Vagina (tissue), 2 donors: ENCODE measurements at regions of chr4 and their contacts with region 1.

Region 1: GRCh38 chr4:87848622-87849351 is 16.0 kb downstream of the MEPE start:
- DNase-seq: no peak
- H3K4me3 ChIP-seq: peak overlapping the region in 1 of 2 donors; percentile 14
- H3K27ac ChIP-seq: no peak overlapping the region
- H3K4me1 ChIP-seq: no peaks in the 10 kb centered on the region
- H3K27me3 ChIP-seq: no peaks in the 10 kb centered on the region
- CTCF ChIP-seq: peak; percentile 25 to 58 (median 53)
- POLR2A ChIP-seq: no peak

Region 2: GRCh38 chr4:87235020-87235671 is 613.6 kb before region 1 on chr4:
- intact Hi-C with region 1: no loop called
- DNase-seq: no peak
- H3K4me3 ChIP-seq: peak overlapping the region; percentile 34 to 39
- H3K27ac ChIP-seq: peak overlapping the region; percentile 57
- H3K4me1 ChIP-seq: peaks cover 3% of the 10 kb centered on the region
- H3K27me3 ChIP-seq: no peaks in the 10 kb centered on the region
- CTCF ChIP-seq: no peak
- POLR2A ChIP-seq: no peak

Region 3: DNA sequence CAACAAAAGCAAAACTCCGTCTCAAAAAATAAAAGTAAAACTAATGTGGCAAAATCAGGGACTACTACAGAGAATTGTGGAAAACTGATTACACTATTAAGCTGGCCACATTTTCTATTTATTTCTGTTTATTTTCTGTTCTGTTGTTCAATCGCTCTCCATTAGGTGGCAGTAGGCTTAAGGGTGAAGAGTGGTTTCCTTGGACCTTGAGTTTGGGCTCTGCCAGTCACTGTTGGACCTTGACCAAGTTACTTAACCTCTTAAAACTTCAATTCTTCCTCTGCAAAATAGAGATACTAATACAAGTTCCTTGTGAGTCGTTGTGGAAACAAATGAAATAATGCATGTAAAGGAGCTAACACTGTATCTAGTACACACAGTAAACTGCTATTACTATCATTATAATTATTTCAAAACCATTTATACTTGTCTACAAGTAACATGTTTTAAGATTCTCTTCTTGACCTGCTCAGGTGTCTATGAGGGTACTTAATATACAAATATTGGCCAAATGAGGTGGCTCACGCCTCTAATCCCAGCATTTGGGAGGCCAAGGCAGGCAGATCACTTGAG is 473.0 kb before region 1 on chr4:
- intact Hi-C with region 1: loop called (anchors 10 kb)
- DNase-seq: no peak
- H3K4me3 ChIP-seq: no peak overlapping the region
- H3K27ac ChIP-seq: peak overlapping the region; percentile 69
- H3K4me1 ChIP-seq: peaks cover 16% of the 10 kb centered on the region
- H3K27me3 ChIP-seq: no peaks in the 10 kb centered on the region
- CTCF ChIP-seq: peak; percentile 29 to 67 (median 67)
- POLR2A ChIP-seq: no peak

Region 4: DNA sequence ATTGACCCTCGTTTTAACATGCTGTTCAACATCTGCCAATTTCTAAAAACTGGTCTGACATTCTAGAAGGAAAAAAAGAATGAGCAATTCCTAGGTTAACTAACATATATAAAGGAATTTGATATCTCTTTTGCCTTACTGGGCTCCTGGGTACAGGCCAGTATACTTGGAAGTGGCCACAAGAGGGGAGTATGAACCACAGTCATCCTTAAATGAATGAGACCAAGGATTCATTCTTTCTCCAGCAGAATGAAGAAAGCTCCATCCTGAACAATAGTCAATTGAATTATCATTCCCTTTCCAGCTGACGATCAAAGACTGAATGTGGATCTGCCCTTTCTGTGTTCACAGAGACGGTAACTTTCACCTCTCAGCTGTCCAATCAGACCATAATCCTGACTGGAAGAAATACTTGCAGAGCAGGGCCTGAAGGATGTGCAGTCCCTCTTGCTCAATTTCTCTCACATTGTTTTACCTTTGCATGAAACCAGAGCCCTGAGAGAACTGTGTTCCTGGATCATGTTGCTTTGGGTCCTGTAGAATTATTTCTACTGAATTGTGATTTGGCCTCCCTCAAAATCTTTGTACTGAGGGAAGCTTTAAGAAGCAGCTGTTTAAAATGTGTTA is 304.8 kb before region 1 on chr4:
- intact Hi-C with region 1: loop called (anchors 10 kb)
- DNase-seq: peak in 1 of 2 donors; percentile 65
- H3K4me3 ChIP-seq: no peak overlapping the region
- H3K27ac ChIP-seq: peak overlapping the region; percentile 32
- H3K4me1 ChIP-seq: peaks cover 9% of the 10 kb centered on the region
- H3K27me3 ChIP-seq: no peaks in the 10 kb centered on the region
- CTCF ChIP-seq: peak; percentile 53 to 63 (median 62)
- POLR2A ChIP-seq: no peak

Region 5: GRCh38 chr4:87679449-87680169 is 169.2 kb before region 1 on chr4:
- intact Hi-C with region 1: loop called (anchors 10 kb)
- DNase-seq: no peak
- H3K4me3 ChIP-seq: no peak overlapping the region
- H3K27ac ChIP-seq: peak overlapping the region; percentile 5
- H3K4me1 ChIP-seq: no peaks in the 10 kb centered on the region
- H3K27me3 ChIP-seq: no peaks in the 10 kb centered on the region
- CTCF ChIP-seq: peak; percentile 59 to 82 (median 73)
- POLR2A ChIP-seq: no peak